Dendritic cell treated with granulocyte-macrophage colony-stimulating factor and Interleukin-4, amounts not matched to agents 40 ng/mL and 50 ng/mL, for 4 days (primary cell): ENCODE measurements at regions of chr15 and their contacts with region 1.

Region 1: DNA sequence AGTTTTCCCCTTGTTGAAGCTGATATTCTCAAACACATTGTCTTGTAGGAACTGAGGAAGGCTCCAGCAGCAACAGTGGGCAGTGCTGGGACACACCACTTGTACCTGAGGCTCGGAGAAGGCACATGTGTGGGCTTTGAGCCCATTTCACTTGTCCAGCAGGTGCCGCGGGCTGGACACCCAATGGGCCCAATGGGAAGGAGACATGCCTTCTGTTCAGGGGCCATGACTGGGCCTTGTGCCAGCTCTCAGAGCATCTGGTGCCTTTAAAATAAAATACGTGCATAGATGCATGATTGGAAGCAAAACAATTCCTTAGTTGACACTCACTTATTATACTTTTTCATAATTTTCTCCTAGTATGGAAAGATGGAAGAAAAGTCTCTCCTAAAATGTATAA is 334.2 kb downstream of the KLF13 start:
- H3K4me3 Mint-ChIP-seq: no peak overlapping the region
- H3K27ac Mint-ChIP-seq: no peak overlapping the region
- H3K4me1 Mint-ChIP-seq: no peaks in the 10 kb centered on the region
- H3K27me3 Mint-ChIP-seq: peaks cover under 1% of the 10 kb centered on the region

Region 2: GRCh38 chr15:31867536-31868442 is 207.0 kb after region 1 on chr15:
- intact Hi-C with region 1: loop called (anchors 10 kb)
- H3K4me3 Mint-ChIP-seq: no peak overlapping the region
- H3K27ac Mint-ChIP-seq: no peak overlapping the region
- H3K4me1 Mint-ChIP-seq: peaks cover 12% of the 10 kb centered on the region
- H3K27me3 Mint-ChIP-seq: peaks cover 37% of the 10 kb centered on the region